Caco-2 (cell line): ENCODE measurements at regions of chr6 and their contacts with region 1.

Region 1: GRCh38 chr6:30914076-30914853 is at the start of gene VARS2:
- DNase-seq: peak; percentile 94 to 98
- H3K4me3 ChIP-seq: peak within 1 kb of the TSS; percentile 54
- H3K4me3 Mint-ChIP-seq: peak within 1 kb of the TSS; percentile 87
- H3K27ac Mint-ChIP-seq: peak within 1 kb of the TSS; percentile 92
- H3K4me1 ChIP-seq: peaks cover 11% of the 10 kb centered on the region
- H3K4me1 Mint-ChIP-seq: peaks cover 14% of the 10 kb centered on the region
- H3K27me3 ChIP-seq: no peaks in the 10 kb centered on the region
- H3K27me3 Mint-ChIP-seq: no peaks in the 10 kb centered on the region
- CTCF ChIP-seq: peak; percentile 9 to 31
- total RNA-seq, gene VARS2: 32.1 and 37.5 TPM in 2 replicates

Region 2: DNA sequence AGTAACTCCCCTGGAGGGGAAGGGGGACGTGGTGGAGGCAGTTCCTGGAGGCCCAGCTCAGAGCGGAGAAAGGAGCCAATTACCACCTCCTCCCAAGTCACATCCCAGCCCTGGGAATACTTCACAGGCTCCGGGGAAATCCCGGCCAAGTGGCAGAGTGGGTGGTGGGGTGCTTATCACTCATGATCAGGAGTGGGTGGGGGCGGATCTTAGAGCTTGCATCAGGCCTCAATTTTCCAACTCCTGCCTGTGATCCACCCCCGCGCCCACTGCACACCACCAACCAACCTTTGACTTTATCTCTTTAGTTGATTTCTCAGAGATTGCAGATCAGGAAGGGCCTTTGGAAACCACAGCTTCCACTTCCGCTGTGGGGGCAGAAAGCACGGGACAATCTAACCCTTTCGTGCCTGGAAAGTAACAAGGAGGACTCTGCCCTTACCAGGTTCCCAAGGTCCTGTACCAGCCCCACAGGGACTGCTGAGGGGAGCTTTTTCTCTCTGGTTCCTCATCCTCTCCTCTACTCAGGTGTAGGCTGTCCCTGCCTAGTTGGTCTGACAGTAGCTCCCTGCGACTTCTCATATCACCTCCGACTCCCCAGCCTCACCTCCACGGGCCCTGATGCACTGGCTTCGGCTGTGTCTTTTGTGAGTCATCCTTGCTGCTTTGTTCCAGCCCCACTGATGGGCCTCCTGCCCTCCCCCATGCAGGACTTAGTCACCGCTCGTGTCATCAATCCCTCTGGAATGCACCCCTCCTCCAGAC is 145.0 kb before region 1 on chr6:
- CTCF ChIA-PET with region 1: interaction called, 3 read pairs
- POLR2A ChIA-PET with region 1: interaction called, 10 read pairs
- intact Hi-C with region 1: no loop called
- DNase-seq: peak; percentile 87 to 92
- H3K4me3 ChIP-seq: peak overlapping the region; percentile 25
- H3K4me3 Mint-ChIP-seq: peak overlapping the region; percentile 95
- H3K27ac Mint-ChIP-seq: peak overlapping the region; percentile 100
- H3K4me1 ChIP-seq: peaks cover 47% of the 10 kb centered on the region
- H3K4me1 Mint-ChIP-seq: peaks cover 35% of the 10 kb centered on the region
- H3K27me3 ChIP-seq: no peaks in the 10 kb centered on the region
- H3K27me3 Mint-ChIP-seq: no peaks in the 10 kb centered on the region
- CTCF ChIP-seq: no peak

Region 3: GRCh38 chr6:30828027-30828960 is 86.0 kb before region 1 on chr6:
- CTCF ChIA-PET with region 1: interaction called, 18 read pairs
- POLR2A ChIA-PET with region 1: no interaction called
- intact Hi-C with region 1: loop called (anchors 1 kb)
- DNase-seq: peak; percentile 83 to 91
- H3K4me3 ChIP-seq: no peak overlapping the region
- H3K4me3 Mint-ChIP-seq: no peak overlapping the region
- H3K27ac Mint-ChIP-seq: peak overlapping the region; percentile 43
- H3K4me1 ChIP-seq: peaks cover 16% of the 10 kb centered on the region
- H3K4me1 Mint-ChIP-seq: peaks cover 27% of the 10 kb centered on the region
- H3K27me3 ChIP-seq: no peaks in the 10 kb centered on the region
- H3K27me3 Mint-ChIP-seq: no peaks in the 10 kb centered on the region
- CTCF ChIP-seq: peak; percentile 85 to 89

Region 4: GRCh38 chr6:30883685-30884520 is 30.4 kb before region 1 on chr6 and contains the start of gene DDR1:
- CTCF ChIA-PET with region 1: interaction called, 15 read pairs
- POLR2A ChIA-PET with region 1: interaction called, 8 read pairs
- intact Hi-C with region 1: loop called (anchors 2 kb)
- DNase-seq: peak; percentile 81 to 82
- H3K4me3 ChIP-seq: peak within 1 kb of the TSS; percentile 46
- H3K4me3 Mint-ChIP-seq: peak within 1 kb of the TSS; percentile 83
- H3K27ac Mint-ChIP-seq: peak within 1 kb of the TSS; percentile 82
- H3K4me1 ChIP-seq: peaks cover 39% of the 10 kb centered on the region
- H3K4me1 Mint-ChIP-seq: peaks cover 43% of the 10 kb centered on the region
- H3K27me3 ChIP-seq: no peaks in the 10 kb centered on the region
- H3K27me3 Mint-ChIP-seq: no peaks in the 10 kb centered on the region
- CTCF ChIP-seq: no peak
- total RNA-seq, gene DDR1: 113 and 115 TPM in 2 replicates

Region 5: GRCh38 chr6:30974488-30975252 is 60.4 kb after region 1 on chr6:
- CTCF ChIA-PET with region 1: no interaction called
- POLR2A ChIA-PET with region 1: no interaction called
- intact Hi-C with region 1: loop called (anchors 2 kb)
- DNase-seq: peak in 1 of 2 experiments; percentile 18
- H3K4me3 ChIP-seq: no peak overlapping the region
- H3K4me3 Mint-ChIP-seq: no peak overlapping the region
- H3K27ac Mint-ChIP-seq: no peak overlapping the region
- H3K4me1 ChIP-seq: no peaks in the 10 kb centered on the region
- H3K4me1 Mint-ChIP-seq: no peaks in the 10 kb centered on the region
- H3K27me3 ChIP-seq: no peaks in the 10 kb centered on the region
- H3K27me3 Mint-ChIP-seq: peaks cover 4% of the 10 kb centered on the region
- CTCF ChIP-seq: no peak

Region 6: DNA sequence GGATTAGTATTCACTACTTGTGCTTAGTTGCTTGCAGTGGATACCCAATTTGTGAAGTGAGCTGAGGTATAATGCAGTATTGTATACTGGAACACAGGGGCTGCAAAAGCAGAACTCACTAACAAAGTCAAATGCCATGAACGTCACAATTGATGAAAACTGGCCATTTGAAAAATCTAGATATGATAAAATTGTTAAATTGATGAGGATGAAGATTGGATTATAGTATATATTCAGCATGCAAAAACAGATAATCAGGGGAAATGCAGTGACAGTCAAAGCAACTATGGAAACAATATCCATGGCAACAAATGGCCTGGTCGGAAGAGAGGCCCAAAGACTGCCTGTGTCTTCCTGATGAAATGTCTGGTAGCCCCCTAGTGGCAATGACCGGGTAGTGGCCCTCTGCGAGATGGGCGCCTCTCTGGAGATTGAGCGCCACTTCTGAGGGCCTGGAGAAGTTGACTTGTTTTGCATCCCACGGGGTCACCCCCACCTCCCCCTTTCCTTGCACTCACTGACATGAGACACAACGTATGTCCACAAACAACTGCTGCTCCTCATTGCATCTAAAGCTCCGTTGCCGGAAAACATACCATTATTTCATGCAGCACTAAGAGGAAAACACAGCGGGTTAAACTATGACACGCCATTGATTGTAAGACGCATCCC is 154.5 kb after region 1 on chr6:
- CTCF ChIA-PET with region 1: interaction called, 54 read pairs
- POLR2A ChIA-PET with region 1: interaction called, 4 read pairs
- intact Hi-C with region 1: loop called (anchors 1 kb)
- DNase-seq: peak; percentile 61 to 78
- H3K4me3 ChIP-seq: no peak overlapping the region
- H3K4me3 Mint-ChIP-seq: no peak overlapping the region
- H3K27ac Mint-ChIP-seq: no peak overlapping the region
- H3K4me1 ChIP-seq: no peaks in the 10 kb centered on the region
- H3K4me1 Mint-ChIP-seq: no peaks in the 10 kb centered on the region
- H3K27me3 ChIP-seq: no peaks in the 10 kb centered on the region
- H3K27me3 Mint-ChIP-seq: no peaks in the 10 kb centered on the region
- CTCF ChIP-seq: peak; percentile 68 to 84